ENCODE measurements at regions of chr2 and their contacts with region 1.

Region 1: DNA sequence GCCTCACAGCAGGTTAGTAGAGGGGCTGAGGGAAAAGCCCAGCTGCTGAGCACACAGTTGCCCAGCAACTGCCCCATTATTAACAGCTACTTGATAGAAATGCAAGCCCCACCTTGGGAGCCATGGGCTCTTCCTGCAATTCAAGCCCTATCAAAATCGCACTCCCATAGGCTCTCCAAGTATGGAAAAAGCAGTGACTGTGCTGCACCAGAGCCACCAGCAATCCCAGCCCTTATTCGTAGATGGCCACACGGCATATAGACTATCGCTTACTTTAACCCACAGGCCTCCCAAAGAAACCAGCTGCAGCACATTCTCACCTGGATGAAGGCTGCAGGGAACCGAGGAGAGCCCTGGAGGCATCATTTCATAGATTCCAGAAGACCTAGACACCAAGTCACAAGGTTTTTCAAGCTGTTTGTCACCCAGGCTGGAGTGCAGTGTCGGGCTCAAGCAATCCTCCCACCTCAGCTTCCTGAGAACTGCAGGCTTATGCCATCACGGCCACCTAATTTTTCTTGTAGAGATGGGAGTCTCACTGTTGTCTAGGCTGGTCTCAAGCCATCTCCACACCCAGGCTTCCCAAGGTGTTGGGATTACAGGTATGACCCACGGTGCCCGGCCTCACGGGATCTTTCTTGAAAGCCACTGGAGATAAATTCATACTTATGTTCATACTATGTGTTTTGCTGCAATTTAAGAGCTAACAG is 11.3 kb downstream of the NCL start:
- DNase-seq: no peak
- ATAC-seq: no peak
- H3K4me3 Mint-ChIP-seq: no peak overlapping the region
- H3K27ac Mint-ChIP-seq: peak overlapping the region; percentile 59
- H3K4me1 Mint-ChIP-seq: peaks cover 14% of the 10 kb centered on the region
- H3K27me3 Mint-ChIP-seq: no peaks in the 10 kb centered on the region

Region 2: DNA sequence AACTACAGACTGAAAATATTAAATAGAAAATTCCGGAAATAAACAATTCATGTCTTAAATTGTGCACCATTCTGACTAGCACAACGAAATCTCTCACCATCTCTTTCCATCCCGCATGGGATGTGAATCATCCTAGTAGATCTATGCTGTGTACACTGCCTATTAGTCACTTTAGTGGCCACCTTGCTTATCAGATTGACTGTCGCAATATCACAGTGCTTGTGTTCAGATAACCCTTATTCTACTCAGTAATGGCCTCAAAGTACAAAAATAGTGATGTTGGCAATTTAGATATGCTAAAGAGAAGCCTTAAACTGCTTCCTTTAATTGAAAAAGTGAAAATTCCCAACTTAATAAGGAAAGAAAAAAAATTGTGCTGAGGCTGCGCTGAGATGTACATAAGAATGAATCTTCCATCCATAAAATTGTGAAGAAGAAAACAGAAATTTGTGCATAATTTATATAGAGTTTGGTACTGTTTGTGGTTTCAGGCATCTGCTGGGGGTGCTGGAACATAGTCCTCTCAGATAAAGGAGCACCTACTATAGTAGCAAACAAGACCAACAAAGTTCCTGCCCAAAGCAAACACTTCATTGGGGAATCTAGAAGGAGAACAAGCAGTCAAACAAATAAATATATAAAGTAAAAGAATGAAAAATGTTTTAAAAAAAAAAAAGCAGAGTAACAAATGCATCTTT is 384.3 kb before region 1 on chr2:
- CTCF ChIA-PET with region 1: no interaction called
- DNase-seq: no peak
- ATAC-seq: peak; percentile 84
- H3K4me3 Mint-ChIP-seq: no peak overlapping the region
- H3K27ac Mint-ChIP-seq: peak overlapping the region; percentile 44
- H3K4me1 Mint-ChIP-seq: peaks cover 19% of the 10 kb centered on the region
- H3K27me3 Mint-ChIP-seq: no peaks in the 10 kb centered on the region

Region 3: GRCh38 chr2:231104115-231104713 is 348.7 kb before region 1 on chr2:
- CTCF ChIA-PET with region 1: interaction called, 15 read pairs
- DNase-seq: peak; percentile 77
- ATAC-seq: peak; percentile 85
- H3K4me3 Mint-ChIP-seq: no peak overlapping the region
- H3K27ac Mint-ChIP-seq: no peak overlapping the region
- H3K4me1 Mint-ChIP-seq: peaks cover 4% of the 10 kb centered on the region
- H3K27me3 Mint-ChIP-seq: no peaks in the 10 kb centered on the region

Region 4: GRCh38 chr2:231227309-231228162 is 225.4 kb before region 1 on chr2:
- CTCF ChIA-PET with region 1: interaction called, 23 read pairs
- DNase-seq: peak; percentile 69
- ATAC-seq: peak; percentile 96
- H3K4me3 Mint-ChIP-seq: no peak overlapping the region
- H3K27ac Mint-ChIP-seq: no peak overlapping the region
- H3K4me1 Mint-ChIP-seq: no peaks in the 10 kb centered on the region
- H3K27me3 Mint-ChIP-seq: no peaks in the 10 kb centered on the region

Region 5: GRCh38 chr2:231411831-231412617 is 40.9 kb before region 1 on chr2:
- CTCF ChIA-PET with region 1: interaction called, 25 read pairs
- DNase-seq: peak; percentile 84
- ATAC-seq: peak; percentile 99
- H3K4me3 Mint-ChIP-seq: peak overlapping the region; percentile 20
- H3K27ac Mint-ChIP-seq: no peak overlapping the region
- H3K4me1 Mint-ChIP-seq: peaks cover 8% of the 10 kb centered on the region
- H3K27me3 Mint-ChIP-seq: peaks cover 42% of the 10 kb centered on the region

Region 6: DNA sequence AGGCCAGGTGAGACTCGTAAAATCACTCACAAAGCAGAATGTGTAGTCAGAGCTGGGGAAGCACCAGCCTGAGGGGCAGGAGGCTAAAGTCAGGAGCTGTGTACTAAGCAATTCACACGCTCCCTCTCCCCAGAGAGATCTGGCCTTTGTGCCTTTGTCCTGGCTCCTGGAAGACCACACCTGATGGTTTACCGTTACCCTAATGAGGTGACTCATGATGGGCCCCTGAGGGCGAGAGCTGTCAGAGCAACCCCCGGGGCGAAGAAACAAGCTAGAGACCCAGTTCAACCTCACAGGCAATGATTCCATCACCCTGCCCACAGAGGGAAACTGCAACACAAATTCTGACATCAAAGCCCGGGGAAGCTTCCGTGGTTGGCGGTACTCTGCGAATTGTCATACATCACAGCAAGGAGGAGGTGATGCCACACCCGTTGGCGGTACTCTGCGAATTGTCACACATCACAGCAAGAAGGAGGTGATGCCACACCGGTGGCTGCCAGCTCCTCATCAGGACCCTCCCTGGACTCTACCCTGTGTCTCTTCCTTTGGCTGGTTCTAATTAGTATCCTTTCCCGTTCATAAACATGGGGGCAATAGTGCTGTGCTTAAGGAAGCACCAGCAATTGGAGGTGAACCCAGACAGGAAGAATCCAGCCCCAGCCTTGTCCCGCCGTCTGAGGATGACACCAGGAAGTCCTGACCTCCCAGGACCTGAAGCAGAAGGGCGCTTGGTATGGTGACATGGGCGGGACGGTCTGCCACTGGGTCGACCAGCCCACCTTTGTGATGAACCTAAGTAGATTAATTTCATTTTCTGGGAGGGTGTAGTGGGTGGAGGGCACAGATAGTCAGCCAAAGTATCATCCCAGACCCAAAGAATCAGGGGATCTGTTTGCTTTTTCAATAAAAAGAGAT is 26.9 kb before region 1 on chr2:
- CTCF ChIA-PET with region 1: interaction called, 20 read pairs
- DNase-seq: peak; percentile 89
- ATAC-seq: peak; percentile 86
- H3K4me3 Mint-ChIP-seq: peak overlapping the region; percentile 66
- H3K27ac Mint-ChIP-seq: peak overlapping the region; percentile 91
- H3K4me1 Mint-ChIP-seq: peaks cover 25% of the 10 kb centered on the region
- H3K27me3 Mint-ChIP-seq: no peaks in the 10 kb centered on the region

Region 7: GRCh38 chr2:231436957-231437356 is 16.0 kb before region 1 on chr2:
- CTCF ChIA-PET with region 1: interaction called, 16 read pairs
- DNase-seq: no peak
- ATAC-seq: no peak
- H3K4me3 Mint-ChIP-seq: no peak overlapping the region
- H3K27ac Mint-ChIP-seq: no peak overlapping the region
- H3K4me1 Mint-ChIP-seq: peaks cover 9% of the 10 kb centered on the region
- H3K27me3 Mint-ChIP-seq: peaks cover under 1% of the 10 kb centered on the region

Region 8: GRCh38 chr2:231463698-231464575 is 11.0 kb after region 1 on chr2 and contains the start of gene NCL:
- CTCF ChIA-PET with region 1: interaction called, 50 read pairs
- DNase-seq: peak; percentile 92
- ATAC-seq: peak; percentile 93
- H3K4me3 Mint-ChIP-seq: peak within 1 kb of the TSS; percentile 87
- H3K27ac Mint-ChIP-seq: peak within 1 kb of the TSS; percentile 100
- H3K4me1 Mint-ChIP-seq: peaks cover 46% of the 10 kb centered on the region
- H3K27me3 Mint-ChIP-seq: no peaks in the 10 kb centered on the region
- total RNA-seq, gene NCL: 634 to 820 TPM

Measured in activated CD8-positive, alpha-beta memory T cell treated with anti-CD3 and anti-CD28 coated beads, Interleukin-2, amount 10 ng/mL, durations not matched to agents 7 days and 5 days (primary cell).